ENCODE measurements at regions of chr9 and their contacts with region 1.

Region 1: DNA sequence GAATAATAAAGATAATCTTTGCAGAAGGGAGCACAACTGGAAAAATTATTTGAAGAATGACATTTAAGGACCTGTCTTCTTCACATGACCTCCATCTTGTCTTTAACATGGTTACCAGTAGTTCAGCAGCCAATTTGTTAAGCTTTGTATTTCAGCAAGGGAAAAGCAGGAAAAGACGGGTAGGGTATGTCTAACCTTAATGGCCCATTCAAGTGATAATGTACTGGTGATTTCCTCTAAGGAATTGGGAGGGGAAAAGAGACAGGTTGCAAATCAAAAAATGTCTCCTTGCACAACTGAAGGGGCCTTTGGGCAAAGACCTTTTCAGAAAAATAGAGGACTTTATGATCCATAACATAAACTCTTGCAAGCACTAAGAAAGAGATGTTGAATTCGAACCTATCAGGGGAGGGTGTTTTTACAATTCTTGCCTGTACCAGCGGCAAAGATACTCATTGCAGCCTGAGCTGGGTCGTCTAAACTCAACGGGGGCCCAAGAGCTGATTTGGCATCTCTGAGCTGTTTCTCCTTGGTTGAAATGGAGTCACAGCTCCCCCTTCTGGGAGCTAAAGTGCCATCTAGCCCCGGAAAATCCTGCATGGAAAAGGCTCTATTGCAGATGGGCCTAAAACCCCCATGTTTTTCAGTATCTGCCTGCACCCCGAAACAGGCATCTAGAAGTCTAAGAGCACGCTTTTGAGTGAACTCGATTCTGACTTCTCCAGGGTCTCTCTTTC is 3.8 kb downstream of the BRINP1 start:
- DNase-seq: peak in 1 of 2 donors; percentile 14
- ATAC-seq: no peak
- H3K4me3 ChIP-seq: no peak overlapping the region
- H3K27ac ChIP-seq: no peak overlapping the region
- H3K4me1 ChIP-seq: peaks cover 0 to 16% (median 5%) of the 10 kb centered on the region in 9 donors
- H3K27me3 ChIP-seq: peaks cover 5 to 44% (median 34%) of the 10 kb centered on the region in 7 donors
- CTCF ChIP-seq: peak in 8 of 9 donors; percentile 10 to 64 (median 53)

Region 2: DNA sequence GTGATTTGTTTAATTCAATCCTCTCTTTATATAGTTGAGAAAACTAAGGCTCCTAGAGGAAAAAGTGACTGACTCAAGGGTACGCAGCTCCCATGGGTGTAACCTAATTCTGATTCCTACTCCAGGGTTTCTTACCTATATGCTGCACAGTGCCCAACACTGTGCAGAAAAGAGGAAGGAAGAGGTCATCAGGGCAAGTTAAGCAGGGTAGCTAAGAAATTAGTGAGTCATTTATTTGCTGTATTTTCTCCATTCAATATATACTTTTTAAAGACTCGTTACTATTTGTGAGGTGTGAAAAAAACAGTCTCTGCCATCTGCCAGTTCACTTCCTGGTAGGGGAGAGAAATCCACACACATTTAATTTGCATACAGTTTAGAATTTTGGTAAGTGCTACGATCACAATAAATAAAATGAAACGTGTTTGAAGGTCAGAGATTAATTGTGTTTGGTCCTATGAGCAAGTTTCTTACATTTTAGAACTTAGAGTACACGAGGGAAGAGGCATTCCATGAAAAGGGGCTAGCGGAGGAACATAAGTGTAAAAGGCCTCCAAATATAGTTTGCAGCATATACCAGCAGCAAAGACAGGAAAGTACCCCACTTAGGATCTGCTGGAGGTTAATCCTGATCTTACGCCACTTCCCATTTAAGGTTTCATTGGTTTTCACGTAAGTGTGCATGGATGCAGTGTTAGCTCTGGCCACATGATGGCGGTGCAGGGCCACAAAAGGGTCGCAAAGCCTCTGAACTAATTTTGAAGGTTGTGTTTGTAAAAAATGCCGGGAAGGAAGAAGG is 1721.1 kb before region 1 on chr9:
- intact Hi-C with region 1: loop called in 1 of 10 experiments (anchors 10 kb)
- DNase-seq: peak; percentile 71 to 73
- ATAC-seq: peak; percentile 55 to 92 (median 82)
- H3K4me3 ChIP-seq: peak overlapping the region in 8 of 10 donors; percentile 15 to 48 (median 38)
- H3K27ac ChIP-seq: peak overlapping the region in 6 of 10 donors; percentile 37 to 80 (median 63)
- H3K4me1 ChIP-seq: peaks cover 0 to 25% (median 13%) of the 10 kb centered on the region in 9 donors
- H3K27me3 ChIP-seq: peaks cover 0 to 46% (median 17%) of the 10 kb centered on the region in 7 donors
- CTCF ChIP-seq: peak; percentile 92 to 99 (median 97)

Region 3: DNA sequence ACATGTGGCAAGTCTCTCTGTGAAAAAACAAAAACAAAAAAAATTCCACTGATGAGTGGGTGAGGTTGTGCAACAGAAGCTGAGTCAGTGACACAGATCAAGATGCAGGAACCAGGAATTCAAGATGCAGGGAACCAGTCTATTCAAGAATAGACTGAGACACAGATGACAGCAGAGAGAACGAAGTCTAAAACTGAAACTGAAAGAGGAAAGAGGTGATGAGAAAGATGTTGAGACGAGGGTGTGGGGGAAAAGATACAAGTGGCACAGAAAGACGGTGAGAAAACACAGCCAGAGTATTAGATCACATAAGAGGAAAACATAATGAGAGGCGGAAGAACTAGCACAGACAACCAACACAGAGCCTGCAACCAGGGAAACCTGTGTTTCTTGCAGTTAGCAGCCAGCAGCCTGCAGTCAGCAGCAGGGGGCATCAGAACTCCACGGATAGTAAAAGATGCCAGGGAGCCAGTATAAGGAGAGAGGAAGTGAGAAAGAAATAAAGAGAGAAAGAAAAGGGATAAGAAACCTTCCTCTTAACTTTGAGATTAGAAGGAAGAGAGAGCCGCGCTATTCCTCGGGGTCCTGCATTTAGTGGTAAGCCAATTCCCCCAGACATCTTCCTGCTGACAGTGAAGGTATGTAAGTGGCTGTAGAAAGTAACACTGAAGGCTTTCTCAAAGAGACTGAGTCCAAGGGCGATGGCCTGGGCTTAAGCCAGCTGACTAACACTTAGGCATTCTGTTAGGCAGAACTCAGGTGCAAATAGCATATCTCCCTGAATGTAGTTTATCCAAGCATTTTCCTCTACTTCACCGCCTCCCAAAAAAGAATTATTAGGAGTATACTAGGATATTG is 1582.3 kb before region 1 on chr9:
- intact Hi-C with region 1: loop called in 2 of 10 experiments (anchors 10 kb)
- DNase-seq: peak; percentile 52 to 78
- ATAC-seq: peak; percentile 70 to 94 (median 93)
- H3K4me3 ChIP-seq: peak overlapping the region in 9 of 10 donors; percentile 11 to 58 (median 50)
- H3K27ac ChIP-seq: peak overlapping the region in 7 of 10 donors; percentile 25 to 87 (median 48)
- H3K4me1 ChIP-seq: peaks cover 0 to 42% (median 16%) of the 10 kb centered on the region in 9 donors
- H3K27me3 ChIP-seq: no peaks in the 10 kb centered on the region
- CTCF ChIP-seq: peak; percentile 58 to 94 (median 82)

Region 4: GRCh38 chr9:118162711-118163110 is 1202.7 kb before region 1 on chr9:
- intact Hi-C with region 1: loop called in 1 of 10 experiments (anchors 10 kb)
- DNase-seq: no peak
- ATAC-seq: no peak
- H3K4me3 ChIP-seq: no peak overlapping the region
- H3K27ac ChIP-seq: no peak overlapping the region
- H3K4me1 ChIP-seq: no peaks in the 10 kb centered on the region
- H3K27me3 ChIP-seq: peaks cover 0 to 21% (median 0%) of the 10 kb centered on the region in 7 donors
- CTCF ChIP-seq: no peak

Region 5: GRCh38 chr9:118829334-118829733 is 536.1 kb before region 1 on chr9:
- intact Hi-C with region 1: loop called in 8 of 10 experiments (anchors 1 to 10 kb)
- DNase-seq: no peak
- ATAC-seq: no peak
- H3K4me3 ChIP-seq: no peak overlapping the region
- H3K27ac ChIP-seq: no peak overlapping the region
- H3K4me1 ChIP-seq: no peaks in the 10 kb centered on the region
- H3K27me3 ChIP-seq: no peaks in the 10 kb centered on the region
- CTCF ChIP-seq: peak; percentile 16 to 77 (median 52)

Region 6: DNA sequence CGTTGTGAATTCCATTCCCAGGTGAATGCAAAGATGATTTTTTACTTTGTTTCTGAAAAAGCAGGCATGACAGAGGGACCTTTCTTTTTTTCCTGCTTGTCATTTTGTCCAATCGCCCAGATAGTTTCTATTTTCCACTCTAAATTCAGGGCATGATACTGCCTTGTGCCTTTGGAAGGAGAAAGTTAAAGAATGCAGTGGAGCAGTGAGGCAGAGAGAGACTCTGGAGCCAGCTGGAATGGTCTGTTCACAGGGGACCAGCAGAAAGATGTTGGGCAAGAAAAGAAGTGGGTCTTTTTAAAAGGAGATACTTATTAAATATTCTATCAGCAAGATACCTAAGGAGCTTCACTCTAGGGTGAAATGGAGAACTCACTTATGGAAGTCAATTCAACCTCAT is 528.6 kb before region 1 on chr9:
- intact Hi-C with region 1: loop called in 1 of 10 experiments (anchors 10 kb)
- DNase-seq: no peak
- ATAC-seq: no peak
- H3K4me3 ChIP-seq: no peak overlapping the region
- H3K27ac ChIP-seq: no peak overlapping the region
- H3K4me1 ChIP-seq: no peaks in the 10 kb centered on the region
- H3K27me3 ChIP-seq: no peaks in the 10 kb centered on the region
- CTCF ChIP-seq: no peak